ENCODE measurements at regions of chr5 and their contacts with region 1.

Region 1: GRCh38 chr5:148179234-148179824 is 11.0 kb downstream of the SPINK14 start:
- DNase-seq: peak in 7 of 9 donors; percentile 10 to 53 (median 36)
- ATAC-seq: peak; percentile 75
- H3K4me3 ChIP-seq: no peak overlapping the region
- H3K4me3 Mint-ChIP-seq: no peak overlapping the region
- H3K27ac ChIP-seq: no peak overlapping the region
- H3K27ac Mint-ChIP-seq: no peak overlapping the region
- H3K4me1 ChIP-seq: no peaks in the 10 kb centered on the region
- H3K4me1 Mint-ChIP-seq: peaks cover 0 to 2% (median 0%) of the 10 kb centered on the region in 7 donors
- H3K27me3 ChIP-seq: no peaks in the 10 kb centered on the region
- H3K27me3 Mint-ChIP-seq: peaks cover 11 to 25% (median 12%) of the 10 kb centered on the region in 5 donors

Region 2: DNA sequence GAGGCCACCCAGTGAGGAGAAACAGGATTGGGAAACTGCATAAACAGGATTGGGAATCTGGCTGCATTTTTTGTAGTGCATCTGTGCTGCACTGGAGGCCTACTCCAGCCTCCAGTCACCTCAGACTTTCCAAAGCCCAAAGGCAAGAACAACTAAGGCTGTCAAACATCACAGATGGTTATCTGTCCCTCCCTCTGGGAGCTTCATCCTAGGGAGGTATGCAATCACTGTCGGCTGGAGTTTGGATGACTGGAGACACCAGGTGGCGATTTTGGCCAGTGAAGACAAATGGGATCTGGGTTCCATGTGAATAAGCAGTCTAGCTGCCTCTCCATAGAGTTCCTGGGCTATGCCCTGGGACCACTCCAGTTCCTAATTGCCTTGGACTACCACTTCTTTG is 80.0 kb after region 1 on chr5:
- CTCF ChIA-PET with region 1: no interaction called
- POLR2A ChIA-PET with region 1: no interaction called
- intact Hi-C with region 1: no loop called
- DNase-seq: no peak
- ATAC-seq: no peak
- H3K4me3 ChIP-seq: no peak overlapping the region
- H3K4me3 Mint-ChIP-seq: no peak overlapping the region
- H3K27ac ChIP-seq: no peak overlapping the region
- H3K27ac Mint-ChIP-seq: no peak overlapping the region
- H3K4me1 ChIP-seq: no peaks in the 10 kb centered on the region
- H3K4me1 Mint-ChIP-seq: no peaks in the 10 kb centered on the region
- H3K27me3 ChIP-seq: no peaks in the 10 kb centered on the region
- H3K27me3 Mint-ChIP-seq: peaks cover 0 to 20% (median 11%) of the 10 kb centered on the region in 5 donors

Region 3: GRCh38 chr5:148353634-148354033 is 174.3 kb after region 1 on chr5:
- CTCF ChIA-PET with region 1: no interaction called
- POLR2A ChIA-PET with region 1: no interaction called
- intact Hi-C with region 1: loop called in 1 of 2 experiments (anchors 1 kb)
- DNase-seq: no peak
- ATAC-seq: no peak
- H3K4me3 ChIP-seq: no peak overlapping the region
- H3K4me3 Mint-ChIP-seq: no peak overlapping the region
- H3K27ac ChIP-seq: no peak overlapping the region
- H3K27ac Mint-ChIP-seq: no peak overlapping the region
- H3K4me1 ChIP-seq: no peaks in the 10 kb centered on the region
- H3K4me1 Mint-ChIP-seq: no peaks in the 10 kb centered on the region
- H3K27me3 ChIP-seq: no peaks in the 10 kb centered on the region
- H3K27me3 Mint-ChIP-seq: peaks cover 0 to 3% (median 0%) of the 10 kb centered on the region in 5 donors

Region 4: DNA sequence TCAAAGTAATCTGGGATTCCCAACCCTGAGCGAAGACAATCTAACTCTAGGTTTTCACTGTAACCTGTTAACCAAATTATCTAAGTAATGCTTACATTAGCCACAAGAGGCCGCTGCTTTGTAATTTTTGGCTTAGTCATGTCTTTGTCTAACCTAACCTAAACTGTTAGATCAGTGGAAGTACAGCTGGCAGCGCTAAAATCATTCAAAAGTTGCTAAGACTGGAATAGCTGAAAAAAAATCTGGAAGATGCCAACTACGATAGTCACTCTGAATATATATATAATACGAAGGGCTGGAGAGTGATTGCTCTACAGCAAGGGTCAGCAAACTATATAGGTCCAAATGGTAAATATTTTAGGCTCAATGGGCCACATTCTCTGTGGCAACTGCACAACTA is 264.7 kb after region 1 on chr5:
- CTCF ChIA-PET with region 1: no interaction called
- POLR2A ChIA-PET with region 1: no interaction called
- intact Hi-C with region 1: loop called (anchors 1 to 2 kb)
- DNase-seq: peak in 7 of 9 donors; percentile 23 to 53 (median 41)
- ATAC-seq: peak; percentile 84
- H3K4me3 ChIP-seq: no peak overlapping the region
- H3K4me3 Mint-ChIP-seq: no peak overlapping the region
- H3K27ac ChIP-seq: no peak overlapping the region
- H3K27ac Mint-ChIP-seq: peak overlapping the region in 2 of 9 donors; percentile 12 to 40
- H3K4me1 ChIP-seq: no peaks in the 10 kb centered on the region
- H3K4me1 Mint-ChIP-seq: peaks cover 0 to 5% (median 0%) of the 10 kb centered on the region in 7 donors
- H3K27me3 ChIP-seq: no peaks in the 10 kb centered on the region
- H3K27me3 Mint-ChIP-seq: peaks cover 0 to 2% (median 0%) of the 10 kb centered on the region in 5 donors

Region 5: GRCh38 chr5:148482691-148483462 is 303.5 kb after region 1 on chr5:
- CTCF ChIA-PET with region 1: no interaction called
- POLR2A ChIA-PET with region 1: no interaction called
- intact Hi-C with region 1: loop called in 1 of 2 experiments (anchors 1 kb)
- DNase-seq: peak; percentile 8 to 62 (median 41)
- ATAC-seq: peak; percentile 80
- H3K4me3 ChIP-seq: no peak overlapping the region
- H3K4me3 Mint-ChIP-seq: peak overlapping the region in 6 of 10 donors; percentile 2 to 55 (median 30)
- H3K27ac ChIP-seq: no peak overlapping the region
- H3K27ac Mint-ChIP-seq: peak overlapping the region in 1 of 9 donors; percentile 57
- H3K4me1 ChIP-seq: no peaks in the 10 kb centered on the region
- H3K4me1 Mint-ChIP-seq: peaks cover 0 to 10% (median 6%) of the 10 kb centered on the region in 7 donors
- H3K27me3 ChIP-seq: no peaks in the 10 kb centered on the region
- H3K27me3 Mint-ChIP-seq: peaks cover 30 to 56% (median 50%) of the 10 kb centered on the region in 5 donors

Region 6: GRCh38 chr5:149114403-149115312 is 935.3 kb after region 1 on chr5:
- CTCF ChIA-PET with region 1: no interaction called
- POLR2A ChIA-PET with region 1: no interaction called
- intact Hi-C with region 1: loop called in 1 of 2 experiments (anchors 1 kb)
- DNase-seq: peak in 5 of 9 donors; percentile 27 to 45 (median 32)
- ATAC-seq: peak; percentile 76
- H3K4me3 ChIP-seq: no peak overlapping the region
- H3K4me3 Mint-ChIP-seq: no peak overlapping the region
- H3K27ac ChIP-seq: no peak overlapping the region
- H3K27ac Mint-ChIP-seq: no peak overlapping the region
- H3K4me1 ChIP-seq: no peaks in the 10 kb centered on the region
- H3K4me1 Mint-ChIP-seq: peaks cover 0 to 1% (median 0%) of the 10 kb centered on the region in 7 donors
- H3K27me3 ChIP-seq: no peaks in the 10 kb centered on the region
- H3K27me3 Mint-ChIP-seq: peaks cover 19 to 31% (median 27%) of the 10 kb centered on the region in 5 donors

Measured in naive thymus-derived CD4-positive, alpha-beta T cell (primary cell).